ENCODE measurements at regions of chr16 and their contacts with region 1.

Region 1: GRCh38 chr16:1492923-1493745 is at the start of gene TELO2:
- DNase-seq: peak; percentile 87 to 98 (median 97)
- ATAC-seq: peak; percentile 89
- H3K4me3 ChIP-seq: peak within 1 kb of the TSS; percentile 92
- H3K27ac ChIP-seq: peak within 1 kb of the TSS; percentile 94
- H3K4me1 ChIP-seq: peaks cover 16 to 56% of the 10 kb centered on the region in 2 experiments; a peak in 3 of 5 replicates
- H3K27me3 ChIP-seq: no peaks in the 10 kb centered on the region
- CTCF ChIP-seq: peak in 1 of 3 experiments; percentile 9; a peak in 1 of 6 replicates
- EP300 ChIP-seq: peak; percentile 96
- POLR2A ChIP-seq: peak; percentile 85
- RAD21 ChIP-seq: no peak
- polyA plus RNA-seq, gene TELO2: 0.51 to 1.4 TPM

Region 2: DNA sequence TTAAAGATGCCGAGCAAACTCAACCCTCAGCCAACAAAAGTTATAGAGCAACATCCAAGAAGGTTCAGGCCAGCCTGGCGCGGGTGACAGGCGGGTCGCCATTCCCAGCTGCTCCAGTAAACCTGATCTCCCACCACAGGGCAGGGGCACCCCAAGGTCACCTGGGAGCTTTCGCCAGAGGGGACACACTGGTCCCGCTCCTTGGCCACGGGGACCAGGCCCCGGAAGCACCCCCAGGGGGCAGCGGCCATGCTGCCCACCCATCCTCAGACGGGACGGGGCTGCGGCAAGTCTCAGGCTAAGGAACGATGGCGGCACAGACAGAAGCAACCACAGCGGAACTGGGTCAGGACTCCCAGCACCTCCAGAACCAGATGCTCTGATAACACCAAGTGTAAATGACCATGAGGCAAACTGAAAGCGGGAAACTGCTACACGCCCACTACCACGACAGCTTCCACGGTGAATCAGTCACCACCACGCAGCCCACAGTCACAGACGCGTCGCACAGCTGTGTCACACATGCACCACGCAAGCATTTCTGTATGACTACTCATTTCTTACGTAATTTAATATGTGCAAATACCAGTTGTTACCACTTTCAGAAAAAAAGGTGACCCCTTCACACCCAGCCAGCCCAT is 34.7 kb before region 1 on chr16:
- CTCF ChIA-PET with region 1: no interaction called
- POLR2A ChIA-PET with region 1: no interaction called
- in situ Hi-C with region 1: no loop called
- intact Hi-C with region 1: no loop called
- DNase-seq: no peak
- ATAC-seq: no peak
- H3K4me3 ChIP-seq: no peak overlapping the region
- H3K27ac ChIP-seq: no peak overlapping the region
- H3K4me1 ChIP-seq: peaks cover 0 to 10% of the 10 kb centered on the region in 2 experiments; a peak in 2 of 5 replicates
- H3K27me3 ChIP-seq: no peaks in the 10 kb centered on the region
- CTCF ChIP-seq: no peak
- EP300 ChIP-seq: no peak
- POLR2A ChIP-seq: no peak
- RAD21 ChIP-seq: no peak

Region 3: GRCh38 chr16:1481906-1482835 is 11.0 kb before region 1 on chr16:
- CTCF ChIA-PET with region 1: no interaction called
- POLR2A ChIA-PET with region 1: interaction called, 13 read pairs
- in situ Hi-C with region 1: no loop called
- intact Hi-C with region 1: no loop called
- DNase-seq: no peak
- ATAC-seq: no peak
- H3K4me3 ChIP-seq: no peak overlapping the region
- H3K27ac ChIP-seq: no peak overlapping the region
- H3K4me1 ChIP-seq: peaks cover 4 to 39% of the 10 kb centered on the region in 2 experiments; a peak in 4 of 5 replicates
- H3K27me3 ChIP-seq: no peaks in the 10 kb centered on the region
- CTCF ChIP-seq: no peak
- EP300 ChIP-seq: no peak
- POLR2A ChIP-seq: no peak
- RAD21 ChIP-seq: no peak

Region 4: DNA sequence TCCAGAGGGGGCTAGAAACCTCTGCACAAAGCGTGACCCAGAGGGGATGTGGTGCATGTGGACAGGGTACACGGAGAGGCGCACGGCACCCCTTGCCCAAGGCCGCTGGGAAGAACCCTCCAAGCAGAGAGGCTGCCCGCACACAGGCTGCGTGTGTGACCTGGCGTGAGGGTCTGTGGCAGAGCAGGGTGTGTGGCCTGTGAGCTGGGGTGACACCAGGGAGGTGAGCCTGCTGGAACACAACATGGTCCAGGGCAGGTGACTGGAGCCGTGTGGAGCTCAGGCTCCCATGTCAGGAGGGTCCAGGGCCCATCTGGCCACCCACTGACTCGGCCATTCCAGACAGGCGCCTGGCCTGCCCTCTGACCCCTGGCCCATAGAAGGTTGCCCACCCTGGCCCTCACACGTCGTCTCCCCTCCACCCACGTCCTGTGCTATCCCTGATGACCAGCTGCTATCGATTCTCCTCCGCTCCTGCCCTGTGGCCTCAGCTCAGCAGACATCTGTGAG is 25.5 kb after region 1 on chr16:
- CTCF ChIA-PET with region 1: no interaction called
- POLR2A ChIA-PET with region 1: no interaction called
- in situ Hi-C with region 1: no loop called
- intact Hi-C with region 1: no loop called
- DNase-seq: no peak
- ATAC-seq: no peak; the same call in 2 of the 3 replicates
- H3K4me3 ChIP-seq: no peak overlapping the region
- H3K27ac ChIP-seq: no peak overlapping the region
- H3K4me1 ChIP-seq: peaks cover 0 to 27% of the 10 kb centered on the region in 2 experiments; a peak in 2 of 5 replicates
- H3K27me3 ChIP-seq: no peaks in the 10 kb centered on the region
- CTCF ChIP-seq: no peak
- EP300 ChIP-seq: no peak
- POLR2A ChIP-seq: no peak
- RAD21 ChIP-seq: no peak